CD8-positive, alpha-beta T cell (primary cell): ENCODE measurements at regions of chr2 and their contacts with region 1.

Region 1: DNA sequence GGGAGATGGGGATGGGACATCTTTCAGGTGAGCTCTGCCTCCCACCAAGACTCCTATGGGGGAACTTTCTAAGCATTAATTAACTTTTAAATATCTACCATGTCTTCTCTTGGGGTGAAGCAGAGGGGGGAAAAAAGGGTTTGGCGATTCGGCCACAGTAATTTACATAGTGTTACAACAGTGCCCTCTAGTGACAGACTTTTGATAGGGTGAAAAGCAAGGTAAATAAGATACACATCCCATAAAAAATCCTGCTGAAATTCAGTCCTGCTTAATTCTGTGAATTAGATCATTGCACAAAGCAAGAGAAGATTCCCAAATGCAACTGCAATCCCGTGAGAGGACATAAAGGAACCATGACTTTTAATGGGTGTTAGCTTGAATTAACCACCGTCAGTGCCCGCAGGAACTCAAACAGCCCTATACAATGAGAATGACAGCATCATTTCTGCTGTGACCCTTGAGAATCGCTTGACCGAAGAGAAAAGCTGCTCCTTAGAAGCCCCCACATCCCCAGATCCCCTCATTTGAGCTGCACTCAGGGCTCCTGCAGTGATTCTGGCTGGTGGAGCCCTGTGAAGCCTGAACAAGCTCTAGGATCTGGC is 32.8 kb downstream of the FAM124B start:
- DNase-seq: peak in 3 of 9 experiments; percentile 10 to 54 (median 45)
- ATAC-seq: no peak
- H3K4me3 ChIP-seq: no peak overlapping the region
- H3K4me3 Mint-ChIP-seq: no peak overlapping the region
- H3K27ac ChIP-seq: no peak overlapping the region
- H3K27ac Mint-ChIP-seq: no peak overlapping the region
- H3K4me1 ChIP-seq: no peaks in the 10 kb centered on the region
- H3K4me1 Mint-ChIP-seq: no peaks in the 10 kb centered on the region
- H3K27me3 ChIP-seq: no peaks in the 10 kb centered on the region
- H3K27me3 Mint-ChIP-seq: peaks cover 2% of the 10 kb centered on the region
- CTCF ChIP-seq: peak; percentile 76

Region 2: DNA sequence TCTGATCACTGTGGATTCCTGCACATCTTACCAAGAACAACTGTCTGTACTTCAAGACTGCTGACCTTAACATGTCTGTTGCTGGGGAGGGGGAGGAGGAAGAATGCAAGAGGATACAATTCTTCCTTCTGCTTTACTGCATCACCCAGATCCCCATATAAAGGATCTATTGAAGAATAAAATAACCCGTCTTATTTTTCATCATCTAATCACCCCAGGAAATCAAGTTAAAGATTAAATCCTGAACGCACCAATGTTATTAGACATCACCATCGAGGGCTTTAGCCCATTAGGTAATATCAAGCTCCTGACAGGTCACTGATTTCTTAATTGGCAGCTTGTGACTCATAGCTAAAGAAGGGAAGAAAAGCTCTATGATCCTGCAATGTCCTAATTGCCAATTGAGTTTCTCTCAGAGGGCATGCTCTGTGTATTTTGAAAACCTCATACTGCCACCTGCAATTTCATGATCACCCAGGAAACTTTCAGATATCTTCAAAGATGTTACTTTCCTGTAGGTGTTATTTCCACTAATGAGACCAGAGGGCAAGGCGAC is 1392.5 kb before region 1 on chr2:
- CTCF ChIA-PET with region 1: no interaction called
- POLR2A ChIA-PET with region 1: no interaction called
- intact Hi-C with region 1: loop called in 1 of 2 experiments (anchors 10 kb)
- DNase-seq: no peak
- ATAC-seq: no peak
- H3K4me3 ChIP-seq: no peak overlapping the region
- H3K4me3 Mint-ChIP-seq: no peak overlapping the region
- H3K27ac ChIP-seq: no peak overlapping the region
- H3K27ac Mint-ChIP-seq: no peak overlapping the region
- H3K4me1 ChIP-seq: no peaks in the 10 kb centered on the region
- H3K4me1 Mint-ChIP-seq: no peaks in the 10 kb centered on the region
- H3K27me3 ChIP-seq: no peaks in the 10 kb centered on the region
- H3K27me3 Mint-ChIP-seq: peaks cover 7% of the 10 kb centered on the region
- CTCF ChIP-seq: no peak

Region 3: GRCh38 chr2:223970343-223971128 is 398.6 kb before region 1 on chr2:
- CTCF ChIA-PET with region 1: interaction called, 11 read pairs
- POLR2A ChIA-PET with region 1: no interaction called
- intact Hi-C with region 1: loop called in 1 of 2 experiments (anchors 2 kb)
- DNase-seq: peak; percentile 16 to 75 (median 55)
- ATAC-seq: peak; percentile 72
- H3K4me3 ChIP-seq: no peak overlapping the region
- H3K4me3 Mint-ChIP-seq: no peak overlapping the region
- H3K27ac ChIP-seq: no peak overlapping the region
- H3K27ac Mint-ChIP-seq: no peak overlapping the region
- H3K4me1 ChIP-seq: no peaks in the 10 kb centered on the region
- H3K4me1 Mint-ChIP-seq: peaks cover 4% of the 10 kb centered on the region
- H3K27me3 ChIP-seq: no peaks in the 10 kb centered on the region
- H3K27me3 Mint-ChIP-seq: no peaks in the 10 kb centered on the region
- CTCF ChIP-seq: peak; percentile 96

Region 4: DNA sequence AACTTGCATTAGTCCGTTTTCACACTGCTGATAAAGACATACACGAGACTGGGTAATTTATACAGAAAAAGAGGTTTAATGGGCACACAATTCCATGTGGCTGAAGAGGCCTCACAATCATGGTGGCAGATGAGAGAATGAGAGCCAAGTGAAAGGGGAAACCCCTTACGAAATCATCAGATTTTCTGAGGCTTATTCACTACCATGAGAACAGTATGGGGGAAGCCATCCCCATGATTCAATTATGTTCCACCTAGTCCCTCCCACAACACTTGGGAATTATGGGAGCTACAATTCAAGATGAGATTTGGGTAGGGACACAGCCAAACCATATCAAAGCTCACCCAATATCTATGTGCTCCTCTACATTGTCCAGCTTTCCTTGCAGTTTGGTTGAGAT is 314.0 kb before region 1 on chr2:
- CTCF ChIA-PET with region 1: no interaction called
- POLR2A ChIA-PET with region 1: no interaction called
- intact Hi-C with region 1: no loop called
- DNase-seq: no peak
- ATAC-seq: no peak
- H3K4me3 ChIP-seq: no peak overlapping the region
- H3K4me3 Mint-ChIP-seq: no peak overlapping the region
- H3K27ac ChIP-seq: no peak overlapping the region
- H3K27ac Mint-ChIP-seq: no peak overlapping the region
- H3K4me1 ChIP-seq: no peaks in the 10 kb centered on the region
- H3K4me1 Mint-ChIP-seq: peaks cover 2% of the 10 kb centered on the region
- H3K27me3 ChIP-seq: no peaks in the 10 kb centered on the region
- H3K27me3 Mint-ChIP-seq: peaks cover 16% of the 10 kb centered on the region
- CTCF ChIP-seq: no peak

Region 5: GRCh38 chr2:224382973-224383555 is 13.9 kb after region 1 on chr2:
- CTCF ChIA-PET with region 1: interaction called, 12 read pairs
- POLR2A ChIA-PET with region 1: no interaction called
- intact Hi-C with region 1: no loop called
- DNase-seq: no peak
- ATAC-seq: no peak
- H3K4me3 ChIP-seq: no peak overlapping the region
- H3K4me3 Mint-ChIP-seq: no peak overlapping the region
- H3K27ac ChIP-seq: no peak overlapping the region
- H3K27ac Mint-ChIP-seq: no peak overlapping the region
- H3K4me1 ChIP-seq: no peaks in the 10 kb centered on the region
- H3K4me1 Mint-ChIP-seq: no peaks in the 10 kb centered on the region
- H3K27me3 ChIP-seq: no peaks in the 10 kb centered on the region
- H3K27me3 Mint-ChIP-seq: no peaks in the 10 kb centered on the region
- CTCF ChIP-seq: no peak